Left ventricle myocardium superior (tissue), 1 donor: ENCODE measurements at regions of chr4 and their contacts with region 1.

Region 1: GRCh38 chr4:94451695-94452475 is at the start of gene PDLIM5:
- DNase-seq: peak; percentile 96
- ATAC-seq: peak; percentile 96
- total RNA-seq, gene PDLIM5: 1,169 TPM

Region 2: DNA sequence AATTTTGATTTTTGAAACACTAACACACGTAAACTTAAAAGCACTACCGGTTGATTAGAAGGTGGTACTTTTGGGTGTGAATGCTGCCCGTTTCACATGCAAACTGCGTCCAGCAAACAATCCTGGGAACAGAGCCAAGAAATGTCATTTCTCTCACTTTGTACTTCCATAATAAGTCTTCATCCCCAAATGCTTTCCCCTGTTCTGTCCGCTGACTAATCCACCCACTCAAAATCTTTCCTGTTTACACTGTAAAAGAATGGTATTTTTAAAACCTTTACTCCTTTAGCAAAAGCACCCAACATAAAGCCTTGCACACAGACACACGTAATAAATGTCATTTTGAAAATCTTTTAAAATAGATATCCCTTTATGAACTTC is 39.2 kb before region 1 on chr4:
- intact Hi-C with region 1: loop called (anchors 5 kb)
- DNase-seq: no peak
- ATAC-seq: no peak

Region 3: GRCh38 chr4:94548571-94548970 is 96.7 kb after region 1 on chr4:
- intact Hi-C with region 1: loop called (anchors 10 kb)
- DNase-seq: no peak
- ATAC-seq: peak; percentile 75